ENCODE measurements at regions of chr5 and their contacts with region 1.

Region 1: DNA sequence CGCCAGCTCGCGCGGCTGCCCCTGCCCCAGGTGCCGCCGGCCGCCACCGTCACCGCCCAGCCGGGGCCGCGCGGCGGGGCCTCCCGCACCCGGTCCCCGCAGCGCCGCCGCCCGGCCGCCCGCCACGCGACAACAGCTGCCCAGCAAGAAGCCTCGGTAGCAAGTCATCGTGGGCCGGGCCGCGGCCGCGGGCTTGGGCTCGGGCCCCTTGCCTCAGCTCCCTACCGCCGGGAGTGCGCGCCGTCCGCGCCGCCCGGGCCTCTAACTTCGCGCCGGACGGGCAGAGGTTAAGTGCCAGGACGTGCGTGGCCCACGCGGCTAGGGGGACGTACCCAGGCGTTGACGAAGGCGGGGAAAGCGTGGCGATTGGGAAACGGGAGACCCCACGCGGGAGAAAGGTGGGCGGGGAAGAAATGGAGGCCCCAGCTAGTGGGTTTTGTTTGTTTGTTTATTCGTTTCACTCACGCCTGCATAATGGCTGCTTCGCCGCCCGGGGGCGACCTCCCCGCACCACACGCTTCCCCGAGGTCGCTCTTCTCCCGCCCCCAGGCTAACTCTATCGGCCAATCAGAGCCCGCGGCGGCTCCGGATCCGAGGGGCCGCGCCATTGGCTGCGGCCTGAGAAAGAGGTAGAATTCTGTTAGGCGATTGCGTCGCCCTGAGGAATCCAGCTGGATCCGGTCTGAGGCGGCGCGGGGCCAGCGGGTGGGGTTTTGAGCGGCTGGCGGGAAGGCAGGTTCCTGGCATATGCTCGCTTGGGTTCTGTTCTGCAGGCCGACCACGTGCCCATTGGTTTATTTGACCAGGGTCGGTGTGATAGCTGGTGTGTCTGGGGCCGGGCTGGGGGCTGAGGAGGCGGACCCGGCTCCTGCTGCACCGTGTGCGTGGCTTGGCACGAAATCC is at the start of gene NADK2:
- DNase-seq: peak; percentile 97
- H3K4me3 ChIP-seq: peak within 1 kb of the TSS; percentile 84
- H3K27ac ChIP-seq: peak within 1 kb of the TSS; percentile 85
- H3K4me1 ChIP-seq: peaks cover 47% of the 10 kb centered on the region
- CTCF ChIP-seq: peak; percentile 72
- total RNA-seq, gene NADK2: 21.2 and 23.8 TPM in 2 replicates

Region 2: GRCh38 chr5:34915139-34915855 is 1326.6 kb before region 1 on chr5 and contains the starts of genes BRIX1 and RAD1:
- CTCF ChIA-PET with region 1: no interaction called
- POLR2A ChIA-PET with region 1: no interaction called
- intact Hi-C with region 1: loop called (anchors 5 kb)
- DNase-seq: peak; percentile 96
- H3K4me3 ChIP-seq: peak within 1 kb of the TSS; percentile 86
- H3K27ac ChIP-seq: peak within 1 kb of the TSS; percentile 79
- H3K4me1 ChIP-seq: peaks cover 27% of the 10 kb centered on the region
- CTCF ChIP-seq: no peak
- total RNA-seq, gene BRIX1: 59.7 and 75.6 TPM in 2 replicates
- total RNA-seq, gene RAD1: 58.4 and 82.1 TPM in 2 replicates

Region 3: DNA sequence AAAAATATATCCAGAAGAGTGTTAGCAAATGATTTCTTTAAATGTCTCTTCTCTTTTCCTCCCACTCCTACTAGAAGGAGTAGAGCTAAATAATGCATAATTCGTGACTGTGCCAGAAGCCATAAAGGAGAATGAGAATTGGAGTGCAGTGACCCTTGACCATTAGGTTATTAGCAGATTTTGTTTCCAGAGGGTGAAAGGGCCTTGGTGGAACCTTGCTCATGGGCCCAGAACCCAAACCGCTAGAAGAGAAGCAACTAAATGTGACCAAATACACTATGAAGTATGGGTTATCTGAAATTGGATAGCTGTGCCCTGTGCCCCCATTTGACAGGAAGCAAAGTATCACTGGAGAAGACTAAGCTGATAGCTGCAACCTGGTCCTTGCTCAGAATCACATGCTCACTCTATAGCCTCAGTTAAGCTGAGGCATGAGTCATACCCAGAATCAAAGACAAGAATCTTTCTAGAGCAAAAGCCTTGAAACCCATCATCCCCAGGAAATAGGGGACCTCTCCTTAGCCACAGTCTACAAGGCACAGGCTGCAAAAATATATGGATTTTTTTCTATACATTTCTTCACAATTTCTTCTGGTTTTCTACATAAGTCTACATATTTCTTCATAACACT is 339.7 kb before region 1 on chr5:
- CTCF ChIA-PET with region 1: no interaction called
- POLR2A ChIA-PET with region 1: no interaction called
- intact Hi-C with region 1: loop called (anchors 5 kb)
- DNase-seq: no peak
- H3K4me3 ChIP-seq: no peak overlapping the region
- H3K27ac ChIP-seq: peak overlapping the region; percentile 54
- H3K4me1 ChIP-seq: peaks cover 87% of the 10 kb centered on the region
- CTCF ChIP-seq: no peak

Region 4: DNA sequence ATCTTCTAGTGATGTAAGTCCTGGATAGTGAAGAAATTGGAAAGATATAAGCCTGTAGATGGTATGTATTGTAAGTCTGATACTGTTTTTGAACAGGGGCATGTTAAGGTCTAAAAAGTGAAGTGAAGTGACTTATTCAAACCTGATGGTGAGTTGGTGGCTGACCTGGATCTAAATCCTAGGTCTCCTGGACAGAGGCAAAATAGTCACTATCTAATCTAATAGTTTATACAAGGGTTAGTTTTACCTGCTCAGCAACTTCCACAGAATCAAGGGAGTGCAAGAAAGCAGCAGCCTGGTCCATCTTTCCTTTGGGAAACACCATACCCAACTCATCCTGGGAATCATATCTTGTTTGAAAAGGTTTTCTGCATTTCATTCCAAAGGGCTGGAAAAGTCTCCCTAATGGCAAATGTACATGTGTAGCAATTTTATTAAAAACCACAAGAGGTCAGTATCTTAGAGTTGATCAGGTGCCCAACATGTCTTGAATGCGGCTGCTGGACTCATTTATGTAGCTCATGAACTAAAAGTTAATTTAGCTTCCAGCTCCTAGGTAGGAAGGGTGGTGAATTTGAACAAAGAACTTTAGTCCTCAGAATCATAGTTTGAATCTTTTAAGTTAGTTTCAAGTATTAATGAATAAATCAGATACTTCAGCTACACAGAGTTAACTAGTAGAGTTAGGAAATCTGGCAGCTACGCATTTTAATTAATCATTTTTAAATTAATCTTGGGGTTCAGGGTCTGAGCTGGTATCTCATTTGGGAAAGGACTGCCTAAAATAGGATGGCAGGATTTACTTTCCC is 64.0 kb before region 1 on chr5:
- CTCF ChIA-PET with region 1: no interaction called
- POLR2A ChIA-PET with region 1: interaction called, 4 read pairs
- intact Hi-C with region 1: loop called (anchors 2 kb)
- DNase-seq: peak; percentile 57
- H3K4me3 ChIP-seq: no peak overlapping the region
- H3K27ac ChIP-seq: no peak overlapping the region
- H3K4me1 ChIP-seq: peaks cover 14% of the 10 kb centered on the region
- CTCF ChIP-seq: peak; percentile 90

Region 5: DNA sequence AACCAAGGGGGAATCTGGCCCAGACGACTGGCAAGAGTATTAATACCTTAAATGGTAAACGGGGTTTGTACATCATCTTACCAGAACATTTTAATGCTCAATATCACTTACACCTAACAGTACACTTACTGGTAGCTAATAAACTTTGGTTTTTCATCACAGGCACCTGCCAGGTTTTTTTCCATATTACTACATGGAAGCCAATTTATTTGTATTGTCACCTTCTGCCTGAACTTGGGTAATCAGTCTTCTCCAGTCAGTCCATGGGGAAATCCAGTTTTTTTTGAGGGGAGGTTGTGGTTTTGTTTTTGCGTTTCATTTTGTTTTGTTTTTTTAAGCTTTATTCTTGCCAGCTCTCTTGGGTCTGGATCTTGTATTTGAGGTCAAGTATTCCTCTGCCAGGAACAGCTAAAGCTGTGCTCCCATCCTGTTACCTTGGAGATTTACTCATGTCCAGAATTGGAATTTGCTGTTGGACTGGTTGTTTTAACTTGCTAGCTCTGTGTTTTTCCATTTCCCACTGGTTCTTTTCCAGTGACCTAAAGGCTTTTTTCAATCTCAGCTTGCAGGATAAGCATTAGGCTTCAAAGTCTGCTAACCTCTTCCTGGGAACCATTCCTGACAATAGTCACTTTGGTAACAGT is 11.0 kb after region 1 on chr5:
- CTCF ChIA-PET with region 1: interaction called, 6 read pairs
- POLR2A ChIA-PET with region 1: interaction called, 21 read pairs
- intact Hi-C with region 1: no loop called
- DNase-seq: no peak
- H3K4me3 ChIP-seq: no peak overlapping the region
- H3K27ac ChIP-seq: no peak overlapping the region
- H3K4me1 ChIP-seq: peaks cover 17% of the 10 kb centered on the region
- CTCF ChIP-seq: no peak

Region 6: DNA sequence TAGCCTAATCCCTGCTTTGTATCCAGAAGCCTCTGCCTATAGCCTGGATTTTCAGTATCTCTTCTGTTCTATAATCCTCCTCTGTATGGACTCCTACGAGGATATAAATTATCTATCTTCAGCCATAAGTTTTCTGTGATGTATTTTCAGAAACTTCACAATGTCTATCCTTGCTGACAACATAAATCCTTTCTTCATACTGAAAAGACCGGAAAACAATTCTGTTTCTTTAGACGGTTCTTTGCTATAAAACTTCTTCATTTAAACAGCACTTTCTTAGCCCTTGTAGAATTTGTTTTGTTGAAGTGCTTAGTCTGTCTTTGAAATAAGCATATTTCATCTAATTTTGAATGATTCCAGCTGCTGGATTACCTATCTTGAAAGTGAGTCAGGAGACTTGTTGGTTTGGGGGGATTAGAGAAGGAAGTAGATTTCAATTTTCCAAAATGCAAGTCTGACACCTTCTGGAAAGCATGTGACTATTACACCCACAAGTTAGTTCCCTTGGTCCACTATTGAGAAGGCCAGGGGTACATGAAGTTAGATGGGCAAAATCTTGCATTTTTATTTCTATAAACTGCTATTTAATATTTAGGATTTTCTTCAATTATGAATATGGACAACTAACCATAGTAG is 156.1 kb after region 1 on chr5:
- CTCF ChIA-PET with region 1: no interaction called
- POLR2A ChIA-PET with region 1: interaction called, 4 read pairs
- intact Hi-C with region 1: loop called (anchors 1 kb)
- DNase-seq: peak; percentile 58
- H3K4me3 ChIP-seq: no peak overlapping the region
- H3K27ac ChIP-seq: no peak overlapping the region
- H3K4me1 ChIP-seq: peaks cover 48% of the 10 kb centered on the region
- CTCF ChIP-seq: peak; percentile 89

Region 7: DNA sequence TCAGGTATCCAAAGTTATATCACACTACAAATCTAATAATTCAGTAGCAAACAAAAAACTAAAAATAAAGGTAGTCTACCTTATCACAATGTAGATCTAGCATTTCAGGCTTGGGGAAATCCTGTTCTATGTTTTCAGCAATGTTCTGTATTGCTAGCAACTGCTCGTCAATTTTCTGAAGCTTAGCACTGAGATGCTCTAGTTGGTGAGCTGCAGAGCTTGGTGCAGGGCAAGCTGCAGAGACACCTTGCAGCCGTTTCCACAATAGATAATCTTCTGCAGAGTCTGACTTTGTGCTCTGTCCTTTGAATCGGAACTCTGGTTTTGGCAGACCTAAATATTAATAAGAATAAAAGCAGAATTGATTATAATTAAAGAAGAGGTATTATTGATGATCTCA is 911.8 kb after region 1 on chr5:
- CTCF ChIA-PET with region 1: no interaction called
- POLR2A ChIA-PET with region 1: no interaction called
- intact Hi-C with region 1: no loop called
- DNase-seq: no peak
- H3K4me3 ChIP-seq: no peak overlapping the region
- H3K27ac ChIP-seq: no peak overlapping the region
- H3K4me1 ChIP-seq: no peaks in the 10 kb centered on the region
- CTCF ChIP-seq: no peak